Activated CD4-positive, alpha-beta memory T cell treated with anti-CD3 and anti-CD28 coated beads, Interleukin-2, amount 10 ng/mL, durations not matched to agents 7 days and 5 days (primary cell): ENCODE measurements at regions of chr15 and their contacts with region 1.

Region 1: DNA sequence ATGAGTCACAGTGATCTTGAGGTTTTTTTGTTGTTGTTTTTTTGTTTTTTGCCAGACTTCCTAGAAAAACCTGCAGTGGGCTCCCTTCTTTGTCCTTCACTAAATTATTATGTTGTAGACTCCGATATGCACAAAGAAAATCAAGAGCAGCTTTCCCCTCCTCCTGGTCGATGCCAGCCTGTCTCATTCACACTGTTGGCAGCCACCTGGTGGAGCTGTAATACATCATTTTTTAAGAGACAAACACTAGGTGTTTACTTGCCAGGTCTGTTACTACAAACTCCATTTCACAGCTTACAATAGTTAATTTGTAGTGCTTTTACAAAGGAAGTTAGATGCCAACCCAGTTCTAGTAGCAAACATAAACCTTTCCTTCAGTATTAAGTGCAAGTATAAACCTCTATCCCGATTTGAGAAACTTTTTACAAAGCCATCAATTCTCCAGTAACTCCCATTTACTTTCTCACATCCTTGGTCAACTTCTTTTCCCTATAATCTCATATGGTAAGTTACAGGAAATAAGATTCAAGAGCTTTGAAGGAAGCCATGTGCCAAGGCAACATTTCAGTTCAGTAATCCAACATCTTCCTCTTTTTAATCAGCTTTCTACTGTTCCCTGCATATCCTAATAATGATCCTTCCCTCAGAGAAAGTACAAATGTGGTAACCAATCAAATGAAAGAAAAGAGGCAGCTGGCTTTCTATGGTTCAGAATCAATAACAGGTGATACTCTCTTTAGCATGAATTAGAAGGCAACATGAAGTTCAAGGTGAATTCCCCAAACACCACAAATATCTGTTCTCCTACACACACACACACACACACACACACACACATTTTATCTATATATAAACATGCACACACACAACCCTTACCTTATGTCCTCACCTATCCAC is 14.0 kb downstream of the AAGAB start:
- DNase-seq: peak; percentile 45
- H3K4me3 Mint-ChIP-seq: peak overlapping the region; percentile 68
- H3K27ac Mint-ChIP-seq: peak overlapping the region; percentile 92
- H3K4me1 Mint-ChIP-seq: peaks cover 46% of the 10 kb centered on the region
- H3K27me3 Mint-ChIP-seq: no peaks in the 10 kb centered on the region

Region 2: GRCh38 chr15:66946578-66947164 is 293.8 kb before region 1 on chr15:
- CTCF ChIA-PET with region 1: interaction called, 19 read pairs
- POLR2A ChIA-PET with region 1: no interaction called
- DNase-seq: peak; percentile 79
- H3K4me3 Mint-ChIP-seq: no peak overlapping the region
- H3K27ac Mint-ChIP-seq: no peak overlapping the region
- H3K4me1 Mint-ChIP-seq: peaks cover 25% of the 10 kb centered on the region
- H3K27me3 Mint-ChIP-seq: peaks cover 10% of the 10 kb centered on the region

Region 3: DNA sequence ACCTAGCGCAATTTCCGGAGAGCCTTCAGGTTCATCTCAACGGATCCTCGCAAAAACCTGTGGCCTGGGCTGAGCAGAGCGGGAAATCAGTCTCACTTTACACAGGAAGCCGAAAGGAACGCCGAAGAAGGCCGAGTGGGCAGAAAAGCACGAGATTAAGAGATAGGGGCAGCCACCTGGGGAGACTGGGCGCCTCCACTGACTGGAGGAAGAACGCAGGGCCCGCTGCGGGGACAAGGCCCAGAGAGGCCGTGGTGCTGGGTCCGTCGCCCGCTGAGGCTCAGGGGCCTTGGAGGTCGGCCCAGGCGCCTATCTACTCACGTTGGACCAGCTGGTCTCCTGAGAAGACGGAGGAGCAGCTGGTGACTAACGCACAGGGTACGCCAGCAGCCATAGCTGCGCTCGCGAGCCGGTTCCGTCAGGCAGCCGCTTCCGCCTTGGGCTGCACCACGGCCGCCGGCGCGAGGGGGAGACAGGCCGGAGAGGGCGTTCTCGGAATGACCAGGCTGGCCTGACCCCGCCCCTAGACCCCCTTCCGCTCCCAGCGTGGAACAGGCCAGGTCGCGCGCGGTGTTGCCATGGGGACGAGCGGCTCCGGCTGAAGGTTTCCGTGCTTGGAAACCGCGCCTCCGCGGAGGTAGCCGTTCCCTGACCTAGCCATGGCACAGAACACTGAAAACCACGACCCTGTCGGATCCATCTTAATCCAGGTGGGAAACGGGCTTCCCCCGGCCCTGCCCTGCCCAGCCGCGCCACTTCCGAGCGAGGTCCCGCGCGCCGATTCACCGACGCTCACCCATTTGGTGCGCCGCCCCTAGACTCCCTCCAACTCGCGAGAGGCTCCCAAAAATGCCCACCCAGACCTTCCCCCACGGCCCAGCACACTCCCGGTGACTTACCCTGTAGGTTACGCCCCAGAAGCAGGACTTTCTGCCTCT is 14.0 kb after region 1 on chr15 and contains the starts of genes AAGAB and IQCH:
- CTCF ChIA-PET with region 1: interaction called, 19 read pairs
- POLR2A ChIA-PET with region 1: interaction called, 26 read pairs
- DNase-seq: peak; percentile 99
- H3K4me3 Mint-ChIP-seq: peak within 1 kb of the TSS; percentile 99
- H3K27ac Mint-ChIP-seq: peak within 1 kb of the TSS; percentile 97
- H3K4me1 Mint-ChIP-seq: peaks cover 45% of the 10 kb centered on the region
- H3K27me3 Mint-ChIP-seq: peaks cover 13% of the 10 kb centered on the region
- total RNA-seq, gene AAGAB: 50.4 to 51.2 TPM
- total RNA-seq, gene IQCH: 0.78 to 0.98 TPM

Region 4: DNA sequence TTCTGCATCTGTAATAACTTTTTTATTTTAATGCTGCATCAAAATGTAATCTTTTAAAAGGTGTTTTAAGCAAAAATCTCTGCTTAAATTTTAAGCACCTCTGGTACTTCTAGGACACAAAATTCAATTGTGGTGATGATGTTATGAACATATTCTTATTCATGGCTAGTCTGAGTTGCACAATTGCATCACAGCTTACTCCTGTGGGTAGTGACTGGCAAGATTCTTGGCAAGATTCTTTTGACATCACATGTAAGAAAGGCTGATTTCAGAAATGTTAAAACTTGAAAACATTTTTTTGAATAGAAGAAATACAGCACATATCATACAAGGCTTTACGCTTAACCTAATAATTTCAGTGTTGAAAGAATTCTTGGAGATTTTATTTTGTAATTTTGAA is 49.8 kb after region 1 on chr15:
- CTCF ChIA-PET with region 1: no interaction called
- POLR2A ChIA-PET with region 1: no interaction called
- DNase-seq: no peak
- H3K4me3 Mint-ChIP-seq: no peak overlapping the region
- H3K27ac Mint-ChIP-seq: no peak overlapping the region
- H3K4me1 Mint-ChIP-seq: no peaks in the 10 kb centered on the region
- H3K27me3 Mint-ChIP-seq: peaks cover 2% of the 10 kb centered on the region

Region 5: GRCh38 chr15:67303490-67304363 is 63.2 kb after region 1 on chr15:
- CTCF ChIA-PET with region 1: interaction called, 10 read pairs
- POLR2A ChIA-PET with region 1: no interaction called
- DNase-seq: no peak
- H3K4me3 Mint-ChIP-seq: no peak overlapping the region
- H3K27ac Mint-ChIP-seq: no peak overlapping the region
- H3K4me1 Mint-ChIP-seq: peaks cover 6% of the 10 kb centered on the region
- H3K27me3 Mint-ChIP-seq: peaks cover 13% of the 10 kb centered on the region